CD14-positive monocyte (primary cell): ENCODE measurements at regions of chr3 and their contacts with region 1.

Region 1: DNA sequence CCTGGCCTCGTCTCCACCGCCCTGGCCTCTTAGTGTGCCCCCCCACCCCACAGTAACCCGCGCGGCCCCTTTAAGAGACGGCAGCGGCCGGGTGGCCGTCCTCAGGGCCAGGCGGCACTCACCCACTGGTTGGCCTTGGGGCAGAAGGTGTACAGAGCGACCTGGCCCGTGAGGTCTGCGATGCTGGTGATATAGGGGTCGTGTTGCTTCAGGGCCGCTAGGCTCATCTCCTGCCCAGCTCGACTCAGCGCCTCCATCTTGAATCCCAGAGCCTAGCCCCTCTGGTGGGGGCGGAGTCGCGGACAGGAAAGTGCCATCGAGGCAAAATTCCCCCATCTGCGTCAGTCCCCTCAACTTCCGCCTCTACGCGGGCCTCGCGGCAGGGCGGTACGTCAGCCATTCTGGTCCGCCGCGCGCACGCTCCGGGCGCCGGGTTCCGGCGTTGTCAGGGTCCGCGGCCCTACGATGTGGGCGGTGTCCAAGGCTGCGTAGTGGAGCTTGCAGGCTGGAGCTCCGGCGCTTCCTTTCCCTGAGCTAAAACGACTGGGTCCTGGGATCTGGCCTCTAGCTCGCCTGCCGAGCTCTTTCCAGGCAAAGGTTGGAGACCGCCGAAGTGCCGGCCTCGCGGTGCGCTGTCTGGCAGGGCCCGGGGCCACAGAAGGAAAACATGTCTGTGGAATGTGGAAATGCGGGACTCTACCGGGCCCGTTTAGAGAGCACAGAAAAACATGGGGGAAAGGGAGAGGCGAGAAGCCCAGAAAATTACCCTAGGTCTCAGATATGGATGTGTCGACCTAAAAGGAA is at the start of gene DCP1A:
- DNase-seq: peak; percentile 94 to 98 (median 96)
- H3K4me3 ChIP-seq: peak within 1 kb of the TSS; percentile 61 to 100 (median 98)
- H3K4me3 Mint-ChIP-seq: peak within 1 kb of the TSS; percentile 95 to 98
- H3K27ac ChIP-seq: peak within 1 kb of the TSS; percentile 96 to 99
- H3K27ac Mint-ChIP-seq: peak within 1 kb of the TSS; percentile 95 to 99 (median 99)
- H3K4me1 ChIP-seq: peaks cover 26 to 29% of the 10 kb centered on the region in 2 donors
- H3K4me1 Mint-ChIP-seq: peaks cover 23% of the 10 kb centered on the region
- H3K27me3 ChIP-seq: no peaks in the 10 kb centered on the region
- H3K27me3 Mint-ChIP-seq: peaks cover 0 to 3% (median 0%) of the 10 kb centered on the region in 3 donors
- CTCF ChIP-seq: no peak
- polyA plus RNA-seq, gene DCP1A: 11.9 to 25.4 (median 19.3) TPM

Region 2: GRCh38 chr3:53320697-53321096 is 26.8 kb before region 1 on chr3:
- intact Hi-C with region 1: no loop called
- DNase-seq: no peak
- H3K4me3 ChIP-seq: no peak overlapping the region
- H3K4me3 Mint-ChIP-seq: no peak overlapping the region
- H3K27ac ChIP-seq: peak overlapping the region in 1 of 2 donors; percentile 50
- H3K27ac Mint-ChIP-seq: peak overlapping the region in 4 of 7 donors; percentile 14 to 91 (median 56)
- H3K4me1 ChIP-seq: peaks cover 4 to 5% of the 10 kb centered on the region in 2 donors
- H3K4me1 Mint-ChIP-seq: peaks cover 9% of the 10 kb centered on the region
- H3K27me3 ChIP-seq: no peaks in the 10 kb centered on the region
- H3K27me3 Mint-ChIP-seq: no peaks in the 10 kb centered on the region
- CTCF ChIP-seq: no peak

Region 3: DNA sequence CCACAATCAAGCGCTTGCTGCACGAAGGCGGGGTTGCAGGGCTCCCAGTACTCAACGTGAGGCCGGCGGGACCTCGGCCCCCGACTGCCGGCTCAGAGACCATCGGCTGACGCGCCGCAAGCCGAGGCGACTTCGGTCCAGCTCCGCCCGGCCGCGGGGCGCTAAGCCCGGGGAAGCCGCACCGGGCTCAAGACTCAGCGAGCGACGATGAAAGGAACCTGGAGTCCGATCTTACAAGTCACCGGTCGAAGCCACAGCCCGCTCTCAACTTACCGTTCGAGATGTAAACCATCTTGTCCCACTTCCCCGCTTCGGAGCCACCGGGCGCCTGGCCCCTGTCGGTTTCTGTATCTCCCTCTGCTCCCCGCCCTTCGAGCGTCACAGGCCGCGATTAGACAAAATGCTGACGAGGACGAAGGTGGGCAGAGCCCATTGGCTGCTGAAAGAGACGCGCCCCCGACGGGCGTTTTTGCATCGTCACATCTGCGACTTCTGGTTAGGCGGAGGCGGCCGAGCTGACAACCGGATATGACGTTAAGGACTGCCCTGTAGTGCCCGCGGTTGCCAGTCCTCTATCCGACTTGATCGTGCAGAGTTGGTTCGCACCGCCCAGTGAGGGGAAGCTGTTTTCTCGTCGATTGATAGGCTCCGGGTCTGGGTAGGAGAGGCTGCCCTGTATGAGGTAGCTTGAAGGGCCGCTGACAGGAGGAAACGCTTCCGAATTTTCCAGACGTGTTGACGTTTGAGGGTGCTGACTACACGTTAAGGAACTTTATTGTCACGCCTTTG is 544.2 kb after region 1 on chr3 and contains the start of gene SELENOK:
- intact Hi-C with region 1: loop called (anchors 5 kb)
- DNase-seq: peak; percentile 99 to 100 (median 100)
- H3K4me3 ChIP-seq: peak within 1 kb of the TSS; percentile 79 to 95 (median 92)
- H3K4me3 Mint-ChIP-seq: peak within 1 kb of the TSS; percentile 85 to 89
- H3K27ac ChIP-seq: peak within 1 kb of the TSS; percentile 74 to 96
- H3K27ac Mint-ChIP-seq: peak within 1 kb of the TSS; percentile 95 to 99 (median 98)
- H3K4me1 ChIP-seq: peaks cover 19 to 22% of the 10 kb centered on the region in 2 donors
- H3K4me1 Mint-ChIP-seq: peaks cover 26% of the 10 kb centered on the region
- H3K27me3 ChIP-seq: peaks cover 25 to 35% of the 10 kb centered on the region in 2 donors
- H3K27me3 Mint-ChIP-seq: peaks cover 9 to 23% (median 20%) of the 10 kb centered on the region in 3 donors
- CTCF ChIP-seq: no peak
- polyA plus RNA-seq, gene SELENOK: 96.4 to 117 (median 105) TPM

Region 4: GRCh38 chr3:53899750-53900149 is 552.3 kb after region 1 on chr3:
- intact Hi-C with region 1: loop called (anchors 5 kb)
- DNase-seq: no peak
- H3K4me3 ChIP-seq: no peak overlapping the region
- H3K4me3 Mint-ChIP-seq: no peak overlapping the region
- H3K27ac ChIP-seq: no peak overlapping the region
- H3K27ac Mint-ChIP-seq: no peak overlapping the region
- H3K4me1 ChIP-seq: no peaks in the 10 kb centered on the region
- H3K4me1 Mint-ChIP-seq: no peaks in the 10 kb centered on the region
- H3K27me3 ChIP-seq: peaks cover 31 to 61% of the 10 kb centered on the region in 2 donors
- H3K27me3 Mint-ChIP-seq: peaks cover 11 to 39% (median 34%) of the 10 kb centered on the region in 3 donors
- CTCF ChIP-seq: no peak